Thyroid gland (tissue), 4 donors: ENCODE measurements at regions of chr7 and their contacts with region 1.

Region 1: GRCh38 chr7:93890464-93891068 is at the start of gene TFPI2:
- DNase-seq: peak in 1 of 2 donors; percentile 2
- H3K4me3 ChIP-seq: peak within 1 kb of the TSS in 2 of 3 donors; percentile 16 to 31
- H3K27ac ChIP-seq: no peak within 1 kb of the TSS
- H3K4me1 ChIP-seq: peaks cover 0 to 8% of the 10 kb centered on the region in 2 donors
- H3K27me3 ChIP-seq: no peaks in the 10 kb centered on the region
- CTCF ChIP-seq: no peak
- POLR2A ChIP-seq: no peak
- total RNA-seq, gene TFPI2: 0.56 to 3.2 TPM in 2 of 4 donors, not detected in the others

Region 2: GRCh38 chr7:92720604-92721350 is 1169.8 kb before region 1 on chr7:
- intact Hi-C with region 1: no loop called
- DNase-seq: no peak
- H3K4me3 ChIP-seq: no peak overlapping the region
- H3K27ac ChIP-seq: no peak overlapping the region
- H3K4me1 ChIP-seq: peaks cover 0 to 24% of the 10 kb centered on the region in 2 donors
- H3K27me3 ChIP-seq: no peaks in the 10 kb centered on the region
- CTCF ChIP-seq: no peak
- POLR2A ChIP-seq: no peak

Region 3: DNA sequence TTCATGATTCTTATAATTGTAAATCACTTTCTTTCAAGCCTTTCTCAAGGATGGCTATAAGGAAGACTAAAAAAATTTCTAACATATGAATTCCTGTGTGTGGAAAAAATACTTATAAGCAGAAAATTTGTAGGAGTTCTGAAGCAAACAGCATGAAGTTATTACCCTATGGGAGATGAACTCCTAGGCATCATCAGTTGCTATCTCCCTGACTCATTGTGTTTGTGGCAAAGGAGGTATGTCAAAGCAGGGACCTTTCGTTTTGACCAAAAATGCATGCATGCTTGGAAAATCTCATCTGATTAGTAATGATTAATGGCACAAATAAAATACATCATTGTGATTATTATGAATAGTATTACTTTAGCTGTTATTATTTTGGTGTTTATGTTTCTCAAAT is 375.4 kb before region 1 on chr7:
- intact Hi-C with region 1: no loop called
- DNase-seq: no peak
- H3K4me3 ChIP-seq: no peak overlapping the region
- H3K27ac ChIP-seq: no peak overlapping the region
- H3K4me1 ChIP-seq: no peaks in the 10 kb centered on the region
- H3K27me3 ChIP-seq: no peaks in the 10 kb centered on the region
- CTCF ChIP-seq: no peak
- POLR2A ChIP-seq: no peak

Region 4: GRCh38 chr7:93828260-93828659 is 62.3 kb before region 1 on chr7:
- intact Hi-C with region 1: no loop called
- DNase-seq: no peak
- H3K4me3 ChIP-seq: no peak overlapping the region
- H3K27ac ChIP-seq: no peak overlapping the region
- H3K4me1 ChIP-seq: no peaks in the 10 kb centered on the region
- H3K27me3 ChIP-seq: no peaks in the 10 kb centered on the region
- CTCF ChIP-seq: no peak
- POLR2A ChIP-seq: no peak

Region 5: GRCh38 chr7:94042381-94042780 is 151.8 kb after region 1 on chr7:
- intact Hi-C with region 1: no loop called
- DNase-seq: no peak
- H3K4me3 ChIP-seq: no peak overlapping the region
- H3K27ac ChIP-seq: no peak overlapping the region
- H3K4me1 ChIP-seq: no peaks in the 10 kb centered on the region
- H3K27me3 ChIP-seq: no peaks in the 10 kb centered on the region
- CTCF ChIP-seq: no peak
- POLR2A ChIP-seq: no peak

Region 6: GRCh38 chr7:94087664-94088352 is 197.2 kb after region 1 on chr7:
- intact Hi-C with region 1: loop called (anchors 10 kb)
- DNase-seq: peak; percentile 10 to 12
- H3K4me3 ChIP-seq: peak overlapping the region in 1 of 3 donors; percentile 1
- H3K27ac ChIP-seq: no peak overlapping the region
- H3K4me1 ChIP-seq: no peaks in the 10 kb centered on the region
- H3K27me3 ChIP-seq: no peaks in the 10 kb centered on the region
- CTCF ChIP-seq: peak; percentile 38 to 74 (median 60)
- POLR2A ChIP-seq: no peak